Activated naive CD4-positive, alpha-beta T cell treated with anti-CD3 and anti-CD28 coated beads, Interleukin-2, amount 10 ng/mL, durations not matched to agents 7 days and 5 days (primary cell): ENCODE measurements at regions of chr19 and their contacts with region 1.

Region 1: DNA sequence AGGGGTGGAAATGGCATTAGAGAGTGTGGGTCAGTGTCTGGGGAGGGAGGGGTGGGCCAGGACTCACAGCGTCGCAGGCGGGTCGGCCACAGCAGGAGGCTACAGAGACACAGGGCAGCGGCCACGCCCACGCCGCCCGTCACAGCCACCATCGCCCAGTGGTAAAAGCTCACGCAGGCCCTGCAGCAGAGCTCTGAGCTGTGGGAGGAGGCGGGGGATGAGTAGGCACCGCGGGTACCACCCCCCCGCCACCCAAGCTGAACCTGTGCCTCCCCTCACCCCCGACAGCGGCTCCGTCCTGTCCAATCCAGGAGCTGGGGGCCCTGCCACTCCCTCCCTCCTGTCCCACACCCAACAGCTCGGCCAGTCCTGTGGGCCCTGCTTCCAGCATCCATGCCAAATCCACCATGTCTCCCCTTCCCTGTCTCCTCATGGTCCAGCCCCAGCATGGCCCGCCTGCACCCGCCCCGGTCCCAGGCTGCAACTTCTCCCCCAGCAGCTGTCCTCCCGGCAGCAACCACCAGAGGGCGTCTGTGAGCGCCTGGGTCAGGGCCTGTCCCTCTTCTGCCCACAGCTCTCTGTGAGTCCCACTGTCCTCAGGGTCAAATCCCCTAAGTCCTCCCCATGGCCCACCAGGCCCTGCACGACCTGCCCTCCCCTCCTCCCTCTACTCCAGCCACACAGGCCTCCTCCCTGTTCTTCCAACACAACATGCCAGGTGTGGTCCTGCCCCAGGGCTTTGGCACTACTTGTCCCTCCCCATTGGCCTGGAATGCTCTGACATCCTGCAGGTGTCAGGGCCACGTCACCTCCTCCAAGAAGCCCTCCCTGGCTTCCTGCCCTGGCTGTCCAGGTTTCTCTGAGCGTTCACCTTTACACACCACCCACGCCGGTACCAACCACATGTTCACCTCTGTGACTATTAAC is 6.0 kb downstream of the TEKTIP1 start:
- DNase-seq: peak; percentile 85
- H3K4me3 Mint-ChIP-seq: no peak overlapping the region
- H3K27ac Mint-ChIP-seq: peak overlapping the region; percentile 9
- H3K4me1 Mint-ChIP-seq: no peaks in the 10 kb centered on the region
- H3K27me3 Mint-ChIP-seq: no peaks in the 10 kb centered on the region

Region 2: GRCh38 chr19:3469638-3470499 is 75.1 kb before region 1 on chr19:
- CTCF ChIA-PET with region 1: no interaction called
- DNase-seq: no peak
- H3K4me3 Mint-ChIP-seq: no peak overlapping the region
- H3K27ac Mint-ChIP-seq: no peak overlapping the region
- H3K4me1 Mint-ChIP-seq: no peaks in the 10 kb centered on the region
- H3K27me3 Mint-ChIP-seq: no peaks in the 10 kb centered on the region

Region 3: GRCh38 chr19:3557461-3558248 is 12.7 kb after region 1 on chr19 and contains the start of gene MFSD12:
- CTCF ChIA-PET with region 1: interaction called, 42 read pairs
- DNase-seq: peak; percentile 95
- H3K4me3 Mint-ChIP-seq: peak within 1 kb of the TSS; percentile 96
- H3K27ac Mint-ChIP-seq: peak within 1 kb of the TSS; percentile 86
- H3K4me1 Mint-ChIP-seq: peaks cover 44% of the 10 kb centered on the region
- H3K27me3 Mint-ChIP-seq: peaks cover 4% of the 10 kb centered on the region